ENCODE measurements at regions of chr19 and their contacts with region 1.

Region 1: GRCh38 chr19:7829561-7830271 is at the start of gene EVI5L:
- DNase-seq: peak; percentile 100
- H3K4me3 ChIP-seq: peak within 1 kb of the TSS; percentile 45 to 78 (median 72)
- H3K27ac ChIP-seq: no peak within 1 kb of the TSS
- H3K4me1 ChIP-seq: peaks cover 0 to 16% (median 7%) of the 10 kb centered on the region in 4 experiments
- H3K27me3 ChIP-seq: peaks cover 0 to 9% (median 0%) of the 10 kb centered on the region in 5 experiments

Region 2: DNA sequence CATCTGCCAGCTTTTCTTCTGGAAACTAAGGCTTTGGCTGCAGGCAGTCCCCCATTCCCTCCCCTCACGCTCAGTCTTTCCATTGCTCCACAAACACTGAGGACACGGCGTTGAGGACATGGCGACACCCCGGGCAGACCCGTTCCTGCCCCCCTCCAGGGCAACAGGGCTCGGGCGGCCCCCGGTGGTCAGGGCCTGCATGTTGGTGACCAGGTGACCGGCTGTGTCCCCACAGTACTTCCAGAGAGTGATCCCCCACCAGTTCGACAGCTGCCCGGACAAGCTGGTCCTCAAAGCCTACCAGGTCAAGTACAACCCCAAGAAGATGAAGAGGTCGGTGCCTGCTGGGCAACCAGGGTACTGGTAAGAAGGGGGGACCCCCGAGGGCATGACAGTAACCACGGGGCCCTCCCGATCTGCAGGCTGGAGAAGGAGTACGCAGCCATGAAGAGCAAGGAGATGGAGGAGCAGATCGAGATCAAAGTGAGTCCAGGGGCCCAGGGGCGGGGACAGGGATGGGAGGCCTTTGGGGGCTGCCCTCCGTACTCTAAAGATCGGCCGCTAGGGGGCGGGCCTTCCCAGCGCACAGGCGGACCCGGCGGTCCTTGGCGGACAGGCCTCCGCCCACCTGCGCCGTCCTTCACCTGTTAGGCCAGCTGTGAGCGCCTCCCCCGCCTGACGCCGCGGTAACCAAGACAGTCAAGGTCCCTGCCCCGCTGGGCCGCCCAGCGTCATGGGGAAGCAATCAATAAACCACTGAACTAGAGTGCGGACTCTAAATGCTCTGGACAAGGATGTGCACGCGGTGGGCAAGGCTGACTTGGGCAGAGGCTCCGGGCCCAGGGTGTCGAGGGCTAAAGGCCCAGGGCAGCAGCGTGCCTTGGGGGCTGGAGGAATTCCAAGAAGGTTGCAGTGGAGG is 23.4 kb after region 1 on chr19:
- CTCF ChIA-PET with region 1: interaction called, 11 read pairs
- POLR2A ChIA-PET with region 1: no interaction called
- DNase-seq: peak; percentile 61 to 72 (median 71)
- H3K4me3 ChIP-seq: peak overlapping the region in 1 of 7 experiments; percentile 33
- H3K27ac ChIP-seq: no peak overlapping the region
- H3K4me1 ChIP-seq: peaks cover 0 to 7% (median 5%) of the 10 kb centered on the region in 4 experiments
- H3K27me3 ChIP-seq: no peaks in the 10 kb centered on the region